ENCODE measurements at regions of chr10 and their contacts with region 1.

Region 1: GRCh38 chr10:8130973-8131911 is 76.8 kb downstream of the GATA3 start:
- DNase-seq: peak; percentile 61
- H3K4me3 Mint-ChIP-seq: no peak overlapping the region
- H3K27ac Mint-ChIP-seq: no peak overlapping the region
- H3K4me1 Mint-ChIP-seq: peaks cover 31% of the 10 kb centered on the region
- H3K27me3 Mint-ChIP-seq: peaks cover 6% of the 10 kb centered on the region

Region 2: DNA sequence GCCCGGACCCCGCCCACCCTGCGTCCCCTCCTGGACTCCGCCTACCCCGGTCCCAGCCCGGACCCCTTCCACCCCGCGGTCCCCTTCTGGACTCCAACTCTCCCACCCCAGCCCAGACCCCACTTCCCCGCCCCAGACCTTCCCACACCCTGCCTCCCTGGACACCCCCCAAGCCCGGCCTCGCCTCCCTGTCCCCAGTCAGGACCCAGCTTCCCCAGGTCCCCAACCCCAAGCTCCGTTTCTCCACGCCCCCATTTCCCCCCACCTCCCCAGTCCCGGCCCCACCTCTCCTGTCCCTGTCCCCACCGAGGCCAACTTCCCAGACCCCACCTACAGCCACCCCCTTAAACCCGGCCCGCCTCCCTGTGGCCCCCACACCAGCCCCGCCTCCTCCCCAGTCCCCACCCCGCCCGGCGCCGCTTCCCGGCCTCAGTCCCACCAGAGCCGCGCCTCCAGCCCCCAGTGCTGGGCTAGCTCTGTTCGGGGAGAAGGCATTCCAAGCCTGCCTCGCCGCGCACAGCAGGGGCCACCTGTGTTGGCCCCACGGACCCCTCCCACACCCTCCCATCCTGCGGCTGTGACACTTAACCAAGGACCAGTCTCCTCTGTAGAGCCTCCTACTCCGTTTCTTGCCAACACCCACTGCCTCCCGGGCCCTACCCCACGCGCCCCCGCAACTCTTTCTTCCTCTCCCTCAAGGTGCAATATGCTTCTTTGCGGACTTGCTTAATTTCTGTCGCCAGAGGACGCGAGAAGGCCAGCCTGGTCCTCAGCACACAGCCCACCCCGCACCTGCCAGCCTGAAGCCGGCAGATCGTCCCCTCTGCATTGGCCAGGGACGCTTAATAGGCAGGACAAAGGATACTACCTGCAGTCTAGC is 463.7 kb before region 1 on chr10:
- CTCF ChIA-PET with region 1: no interaction called
- intact Hi-C with region 1: no loop called
- DNase-seq: peak; percentile 10
- H3K4me3 Mint-ChIP-seq: peak overlapping the region; percentile 48
- H3K27ac Mint-ChIP-seq: no peak overlapping the region
- H3K4me1 Mint-ChIP-seq: peaks cover 8% of the 10 kb centered on the region
- H3K27me3 Mint-ChIP-seq: peaks cover 51% of the 10 kb centered on the region

Region 3: DNA sequence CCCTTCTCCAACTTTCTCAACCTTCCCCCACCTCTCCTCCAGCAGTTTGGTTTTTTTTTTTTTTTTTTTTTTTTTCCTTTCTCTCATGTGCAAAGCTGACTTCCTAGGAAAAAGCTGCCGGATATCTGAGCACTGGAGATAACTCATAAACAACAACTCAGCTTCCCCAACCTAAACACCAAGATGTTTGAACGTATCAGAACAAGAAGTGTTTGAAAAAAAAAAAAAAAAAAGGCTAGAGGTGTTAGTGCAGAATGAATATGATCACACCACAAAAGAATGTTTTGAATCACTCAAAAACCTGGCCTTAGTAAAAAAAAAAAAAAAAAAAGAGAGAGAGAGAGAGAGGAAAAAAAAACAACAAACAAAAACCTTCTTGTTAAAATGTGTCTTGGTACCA is 65.6 kb before region 1 on chr10:
- CTCF ChIA-PET with region 1: no interaction called
- intact Hi-C with region 1: loop called (anchors 1 kb)
- DNase-seq: no peak
- H3K4me3 Mint-ChIP-seq: no peak overlapping the region
- H3K27ac Mint-ChIP-seq: peak overlapping the region; percentile 78
- H3K4me1 Mint-ChIP-seq: peaks cover 88% of the 10 kb centered on the region
- H3K27me3 Mint-ChIP-seq: no peaks in the 10 kb centered on the region

Region 4: DNA sequence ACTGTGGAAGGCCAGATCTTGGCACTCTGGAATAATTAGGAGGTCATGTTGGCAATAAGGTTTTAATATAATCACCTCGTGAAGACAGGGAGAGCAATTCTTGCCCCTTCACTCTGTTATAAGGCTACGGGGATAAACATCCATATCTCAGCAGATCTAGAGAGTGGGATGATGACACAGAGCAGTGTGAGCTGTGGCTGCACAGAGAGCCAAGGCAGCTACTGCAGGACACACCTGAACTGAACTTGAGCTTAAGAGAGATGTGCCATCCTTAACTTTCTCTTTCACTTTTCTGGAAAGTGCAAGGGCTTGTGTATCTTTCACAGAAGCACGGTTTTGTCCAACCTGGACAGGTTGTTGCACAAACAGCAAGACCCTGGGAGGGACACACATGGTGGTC is 97.9 kb after region 1 on chr10:
- CTCF ChIA-PET with region 1: no interaction called
- intact Hi-C with region 1: no loop called
- DNase-seq: no peak
- H3K4me3 Mint-ChIP-seq: no peak overlapping the region
- H3K27ac Mint-ChIP-seq: no peak overlapping the region
- H3K4me1 Mint-ChIP-seq: peaks cover 25% of the 10 kb centered on the region
- H3K27me3 Mint-ChIP-seq: no peaks in the 10 kb centered on the region

Region 5: GRCh38 chr10:8254350-8254749 is 123.1 kb after region 1 on chr10:
- CTCF ChIA-PET with region 1: no interaction called
- intact Hi-C with region 1: loop called (anchors 2 kb)
- DNase-seq: peak; percentile 40
- H3K4me3 Mint-ChIP-seq: no peak overlapping the region
- H3K27ac Mint-ChIP-seq: peak overlapping the region; percentile 73
- H3K4me1 Mint-ChIP-seq: peaks cover 23% of the 10 kb centered on the region
- H3K27me3 Mint-ChIP-seq: no peaks in the 10 kb centered on the region

Region 6: GRCh38 chr10:8306685-8307364 is 175.6 kb after region 1 on chr10:
- CTCF ChIA-PET with region 1: no interaction called
- intact Hi-C with region 1: no loop called
- DNase-seq: no peak
- H3K4me3 Mint-ChIP-seq: no peak overlapping the region
- H3K27ac Mint-ChIP-seq: no peak overlapping the region
- H3K4me1 Mint-ChIP-seq: peaks cover 11% of the 10 kb centered on the region
- H3K27me3 Mint-ChIP-seq: peaks cover 6% of the 10 kb centered on the region

Region 7: GRCh38 chr10:9010093-9010492 is 878.9 kb after region 1 on chr10:
- CTCF ChIA-PET with region 1: no interaction called
- intact Hi-C with region 1: loop called (anchors 10 kb)
- DNase-seq: peak; percentile 39
- H3K4me3 Mint-ChIP-seq: no peak overlapping the region
- H3K27ac Mint-ChIP-seq: no peak overlapping the region
- H3K4me1 Mint-ChIP-seq: peaks cover 47% of the 10 kb centered on the region
- H3K27me3 Mint-ChIP-seq: no peaks in the 10 kb centered on the region

Measured in activated naive CD4-positive, alpha-beta T cell treated with anti-CD3 and anti-CD28 coated beads for 36 hours (primary cell).